Natural killer cell (primary cell): ENCODE measurements at regions of chr14 and their contacts with region 1.

Region 1: DNA sequence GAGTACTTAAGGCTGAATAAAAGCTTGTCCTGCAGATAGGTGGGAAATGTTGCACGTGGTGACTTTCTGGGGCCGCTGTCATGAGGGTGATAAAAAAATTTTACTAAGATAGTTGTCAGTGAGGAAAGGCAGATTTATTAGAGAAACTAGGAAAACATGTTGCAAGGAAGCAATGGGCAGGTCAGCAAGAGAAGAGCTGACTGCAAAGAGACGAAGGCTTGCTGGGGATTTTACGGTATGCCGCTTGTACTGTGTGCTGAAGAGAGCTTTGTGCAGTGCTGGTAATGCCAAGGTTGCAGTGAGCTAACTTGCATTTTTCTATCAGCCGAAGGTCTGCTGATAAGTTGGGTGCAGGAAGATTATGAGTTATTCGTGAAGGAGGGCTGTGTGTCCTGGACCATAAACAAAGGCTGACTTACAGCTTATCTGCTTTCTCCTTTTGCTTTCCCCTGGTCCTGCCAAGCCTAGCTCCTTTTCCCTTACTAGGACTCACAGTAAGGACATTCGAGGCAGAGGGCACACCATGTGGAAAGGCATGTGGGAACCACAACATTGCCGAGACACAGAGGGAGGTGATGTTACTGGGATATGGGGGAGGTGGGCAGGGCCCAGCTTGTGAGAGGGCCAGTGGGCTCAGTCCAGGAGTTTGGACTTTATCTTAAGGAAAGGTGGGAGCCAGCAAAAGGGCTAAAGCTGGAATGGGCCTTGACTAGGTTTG is 7.4 kb upstream of the CCDC88C start:
- DNase-seq: no peak
- ATAC-seq: no peak
- H3K4me3 ChIP-seq: no peak overlapping the region
- H3K4me3 Mint-ChIP-seq: no peak overlapping the region
- H3K27ac ChIP-seq: no peak overlapping the region
- H3K27ac Mint-ChIP-seq: no peak overlapping the region
- H3K4me1 ChIP-seq: peaks cover 6% of the 10 kb centered on the region
- H3K4me1 Mint-ChIP-seq: peaks cover 6 to 25% of the 10 kb centered on the region in 2 donors
- H3K27me3 ChIP-seq: no peaks in the 10 kb centered on the region
- H3K27me3 Mint-ChIP-seq: no peaks in the 10 kb centered on the region
- CTCF ChIP-seq: no peak

Region 2: DNA sequence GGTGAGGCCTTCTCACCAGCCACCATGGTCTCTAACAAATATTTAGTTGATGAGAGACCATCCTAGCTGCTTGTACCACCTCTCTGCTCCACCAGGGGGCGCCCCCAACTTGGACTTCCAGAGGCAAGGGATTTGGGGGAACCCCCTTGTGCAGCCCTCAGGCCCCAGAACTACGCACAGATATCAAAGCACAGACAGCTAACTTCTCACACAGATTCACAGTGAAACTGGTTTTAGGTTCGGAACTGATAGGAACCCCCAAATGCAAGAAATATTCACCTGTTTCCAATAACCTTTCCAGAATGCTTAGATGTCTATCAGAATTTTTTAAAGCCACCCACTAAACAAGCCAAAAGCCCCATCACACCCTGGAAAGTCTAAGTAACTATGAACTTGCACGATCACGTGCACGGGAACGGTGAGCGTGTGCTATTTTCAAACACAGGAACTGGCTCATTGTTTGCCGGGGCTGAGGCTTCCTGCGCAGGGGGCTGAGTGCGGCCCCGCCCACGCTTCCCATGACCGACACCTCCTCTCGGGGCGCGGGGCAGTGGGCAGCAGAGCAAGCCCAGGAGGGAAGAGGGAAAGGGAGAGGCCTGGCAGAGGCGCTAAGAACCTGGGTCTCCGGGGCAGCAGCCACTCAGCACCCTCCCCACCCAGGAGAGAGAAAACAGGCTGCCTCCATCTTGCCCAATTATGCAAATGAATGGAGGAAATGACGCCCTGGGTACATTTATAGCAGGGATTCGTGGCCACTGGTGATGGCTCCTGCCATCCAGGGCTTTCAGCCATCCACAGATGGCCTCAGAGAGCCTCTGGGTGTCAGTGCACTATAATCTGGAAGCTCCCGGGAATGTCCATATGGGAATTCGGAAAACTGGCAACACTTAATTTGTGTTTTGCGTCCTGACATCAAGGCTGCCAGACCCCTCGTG is 101.0 kb before region 1 on chr14:
- intact Hi-C with region 1: loop called (anchors 1 kb)
- DNase-seq: peak; percentile 95
- ATAC-seq: peak; percentile 76 to 94 (median 82)
- H3K4me3 ChIP-seq: peak overlapping the region; percentile 11
- H3K4me3 Mint-ChIP-seq: peak overlapping the region; percentile 94
- H3K27ac ChIP-seq: peak overlapping the region; percentile 94
- H3K27ac Mint-ChIP-seq: peak overlapping the region; percentile 100
- H3K4me1 ChIP-seq: peaks cover 67% of the 10 kb centered on the region
- H3K4me1 Mint-ChIP-seq: peaks cover 48 to 59% of the 10 kb centered on the region in 2 donors
- H3K27me3 ChIP-seq: no peaks in the 10 kb centered on the region
- H3K27me3 Mint-ChIP-seq: no peaks in the 10 kb centered on the region
- CTCF ChIP-seq: peak; percentile 93